ENCODE measurements at regions of chr13 and their contacts with region 1.

Region 1: DNA sequence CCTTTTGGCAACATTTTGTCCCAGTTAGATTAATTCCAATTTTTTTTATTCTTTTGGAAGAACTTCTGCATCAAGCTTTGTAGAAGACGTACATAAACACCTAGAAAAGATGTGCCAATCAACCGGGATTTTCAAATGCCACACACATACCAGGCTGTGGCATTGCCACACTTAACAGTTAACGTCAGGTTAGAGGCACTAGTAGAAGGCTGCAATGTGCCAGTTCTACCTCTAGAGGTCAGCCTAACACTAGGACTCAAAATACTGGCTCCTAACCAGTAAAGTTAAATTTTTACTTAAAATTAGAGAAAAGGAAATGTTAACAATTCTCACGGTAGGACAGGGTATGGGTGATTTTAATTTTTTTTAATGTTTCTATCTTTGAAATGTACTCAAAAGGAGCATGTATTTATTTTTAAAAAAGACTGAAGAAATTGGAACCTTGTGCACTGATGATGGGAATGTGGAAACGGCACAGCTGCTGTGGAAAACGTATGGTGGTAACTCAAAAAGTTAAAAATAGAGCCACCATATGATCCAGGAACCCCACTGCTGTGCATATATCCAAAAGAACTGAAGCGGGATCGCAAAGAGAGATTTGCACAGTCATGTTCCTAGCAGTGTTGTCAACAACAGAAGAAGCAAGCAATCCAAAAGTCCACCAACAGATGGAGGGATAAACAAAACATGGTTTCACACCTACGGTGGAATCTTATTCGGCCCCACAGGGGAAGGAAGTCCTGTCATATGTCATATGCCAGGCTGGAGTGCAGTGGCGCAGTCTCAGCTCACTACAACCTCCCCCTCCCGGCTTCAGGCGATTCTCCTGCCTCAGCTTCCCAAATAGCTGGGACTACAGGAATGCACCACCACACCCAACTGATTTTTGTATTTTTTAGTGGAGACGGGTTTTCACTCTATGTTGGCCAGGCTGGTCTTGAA is 30.3 kb downstream of the CRYL1 start:
- DNase-seq: peak; percentile 72
- CTCF ChIP-seq: peak; percentile 86

Region 2: DNA sequence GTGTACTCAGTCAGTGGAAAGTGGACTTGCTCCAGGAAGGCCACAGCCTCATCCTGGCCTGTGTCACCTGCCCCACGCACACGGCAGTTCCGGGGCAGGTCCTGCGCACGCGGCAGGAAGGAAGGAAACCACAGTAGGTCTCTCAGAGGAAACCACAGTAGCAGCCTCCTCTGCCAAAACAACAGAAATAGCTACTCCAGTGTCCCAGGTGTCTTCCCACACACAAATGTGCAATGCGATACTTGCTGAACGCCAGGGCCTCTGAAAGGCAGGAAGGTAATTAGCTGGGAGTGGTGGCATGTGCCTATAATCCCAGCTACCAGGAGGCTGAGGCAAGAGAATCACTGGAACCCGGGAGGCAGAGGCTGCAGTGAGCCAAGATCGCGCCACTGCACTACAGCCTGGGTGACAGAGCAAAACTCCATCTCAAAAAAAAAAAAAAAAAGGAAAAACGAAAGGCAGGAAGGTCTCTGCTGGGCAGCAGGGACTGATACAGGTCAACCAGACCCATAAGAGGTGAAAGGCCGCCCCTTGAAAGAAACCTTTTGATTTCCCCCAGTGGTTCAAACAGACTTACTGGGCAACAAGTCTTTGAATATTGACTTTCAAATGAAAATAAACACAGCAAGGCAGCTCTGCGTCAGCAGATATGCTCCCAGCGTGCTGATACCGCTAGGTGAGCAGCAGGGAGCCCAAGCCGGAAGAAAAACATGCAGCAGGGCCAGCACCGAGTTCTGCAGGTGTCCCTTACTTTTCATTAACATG is 19.2 kb before region 1 on chr13:
- CTCF ChIA-PET with region 1: interaction called, 33 read pairs
- POLR2A ChIA-PET with region 1: no interaction called
- DNase-seq: peak; percentile 76
- CTCF ChIP-seq: no peak

Region 3: DNA sequence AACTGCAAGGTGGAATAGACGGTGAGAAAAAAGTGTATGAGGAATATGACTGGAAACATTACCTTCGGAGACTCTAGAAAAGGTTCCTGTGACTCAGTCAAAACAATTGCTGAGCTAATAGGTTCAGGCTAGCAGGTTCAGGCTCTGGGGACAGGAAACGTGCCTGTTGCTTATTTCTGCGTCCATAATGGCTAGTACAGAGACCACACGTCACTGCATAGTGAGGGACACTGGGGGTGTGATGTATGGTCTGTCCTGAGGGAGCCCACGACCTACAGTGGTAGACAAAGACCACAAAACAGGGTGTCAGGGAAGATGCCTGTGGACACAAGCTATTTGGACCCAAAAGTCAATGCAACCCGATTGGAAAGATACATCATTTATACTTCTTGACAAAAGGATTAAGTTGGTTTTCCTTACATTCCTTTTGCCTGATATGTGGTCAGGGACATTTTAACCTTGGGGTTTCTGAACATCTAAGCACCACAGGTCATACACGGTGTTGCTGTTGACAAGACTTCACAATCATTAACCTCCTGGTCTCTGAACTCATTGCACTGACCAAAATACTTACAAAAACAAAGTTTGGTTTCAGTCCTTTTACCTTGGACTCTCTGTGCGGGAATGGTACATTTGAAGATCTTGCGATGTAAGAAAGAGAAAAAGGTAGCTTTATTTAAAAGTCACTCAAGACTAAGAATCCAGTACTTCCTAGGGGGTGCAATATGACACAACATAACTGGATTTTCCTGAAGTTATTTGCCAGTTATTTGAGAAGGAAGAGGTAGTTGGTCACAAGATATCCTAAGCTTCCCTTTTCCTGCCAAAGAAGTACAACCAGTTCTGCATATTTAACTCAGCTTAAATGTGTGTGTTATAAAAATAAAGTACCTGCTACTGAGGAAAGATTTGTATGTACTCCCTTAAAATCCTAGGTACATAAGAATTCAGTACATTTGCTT is 10.3 kb after region 1 on chr13:
- CTCF ChIA-PET with region 1: interaction called, 26 read pairs
- POLR2A ChIA-PET with region 1: no interaction called
- DNase-seq: no peak
- CTCF ChIP-seq: no peak

Region 4: GRCh38 chr13:20713751-20714150 is 218.4 kb after region 1 on chr13:
- CTCF ChIA-PET with region 1: interaction called, 14 read pairs
- POLR2A ChIA-PET with region 1: no interaction called
- DNase-seq: no peak
- CTCF ChIP-seq: no peak